Activated T-helper 1 cell treated with anti-CD3 and anti-CD28 coated beads, Interleukin-12 subunit alpha, Interleukin-12 subunit beta, Interleukin-2, Interleukin-4 antibody, amounts not matched to agents 30 ng/mL and 10 ng/mL and 1 ng/mL, durations not matched to agents 14 hours and 24 hours and 36 hours (primary cell): ENCODE measurements at regions of chr1 and their contacts with region 1.

Region 1: GRCh38 chr1:88935522-88936222 is 44.3 kb upstream of the GTF2B start:
- DNase-seq: no peak
- H3K4me3 Mint-ChIP-seq: no peak overlapping the region
- H3K27ac Mint-ChIP-seq: no peak overlapping the region
- H3K4me1 Mint-ChIP-seq: no peaks in the 10 kb centered on the region
- H3K27me3 Mint-ChIP-seq: no peaks in the 10 kb centered on the region

Region 2: DNA sequence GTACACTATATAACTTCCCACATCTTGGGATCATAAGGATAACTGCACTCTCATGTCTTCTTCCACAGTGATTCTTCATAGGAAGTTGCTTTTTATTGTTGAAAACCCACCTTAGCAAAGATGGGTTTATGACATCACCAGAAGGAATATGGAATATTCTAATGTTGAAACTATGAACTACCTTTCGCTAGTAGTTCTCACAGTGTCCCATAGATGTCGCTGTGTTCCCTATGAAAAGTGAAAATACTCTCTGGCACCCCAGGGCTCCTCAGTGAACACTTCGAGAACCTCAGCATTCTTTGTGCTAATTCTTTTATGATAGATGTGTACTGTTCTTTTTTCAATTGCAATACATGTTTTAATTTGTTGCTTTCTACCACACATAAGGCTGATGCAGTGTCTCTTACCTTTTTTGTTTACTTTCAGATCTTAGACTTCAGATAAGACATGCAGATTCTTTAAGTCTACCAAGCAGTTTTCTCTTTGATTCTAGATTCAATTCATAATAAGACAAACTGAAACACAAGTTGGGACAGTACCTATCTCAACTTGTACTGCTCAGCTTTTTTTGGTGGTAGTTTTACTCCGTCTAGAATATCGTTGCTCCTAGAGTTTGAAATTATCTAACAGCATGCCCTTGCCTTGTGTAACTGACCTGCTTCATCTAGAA is 135.2 kb before region 1 on chr1:
- intact Hi-C with region 1: loop called (anchors 5 kb)
- DNase-seq: peak; percentile 16
- H3K4me3 Mint-ChIP-seq: no peak overlapping the region
- H3K27ac Mint-ChIP-seq: no peak overlapping the region
- H3K4me1 Mint-ChIP-seq: peaks cover 14% of the 10 kb centered on the region
- H3K27me3 Mint-ChIP-seq: no peaks in the 10 kb centered on the region

Region 3: GRCh38 chr1:88983791-88984559 is 48.3 kb after region 1 on chr1:
- intact Hi-C with region 1: no loop called
- DNase-seq: no peak
- H3K4me3 Mint-ChIP-seq: peak overlapping the region; percentile 31
- H3K27ac Mint-ChIP-seq: peak overlapping the region; percentile 45
- H3K4me1 Mint-ChIP-seq: peaks cover 86% of the 10 kb centered on the region
- H3K27me3 Mint-ChIP-seq: no peaks in the 10 kb centered on the region

Region 4: DNA sequence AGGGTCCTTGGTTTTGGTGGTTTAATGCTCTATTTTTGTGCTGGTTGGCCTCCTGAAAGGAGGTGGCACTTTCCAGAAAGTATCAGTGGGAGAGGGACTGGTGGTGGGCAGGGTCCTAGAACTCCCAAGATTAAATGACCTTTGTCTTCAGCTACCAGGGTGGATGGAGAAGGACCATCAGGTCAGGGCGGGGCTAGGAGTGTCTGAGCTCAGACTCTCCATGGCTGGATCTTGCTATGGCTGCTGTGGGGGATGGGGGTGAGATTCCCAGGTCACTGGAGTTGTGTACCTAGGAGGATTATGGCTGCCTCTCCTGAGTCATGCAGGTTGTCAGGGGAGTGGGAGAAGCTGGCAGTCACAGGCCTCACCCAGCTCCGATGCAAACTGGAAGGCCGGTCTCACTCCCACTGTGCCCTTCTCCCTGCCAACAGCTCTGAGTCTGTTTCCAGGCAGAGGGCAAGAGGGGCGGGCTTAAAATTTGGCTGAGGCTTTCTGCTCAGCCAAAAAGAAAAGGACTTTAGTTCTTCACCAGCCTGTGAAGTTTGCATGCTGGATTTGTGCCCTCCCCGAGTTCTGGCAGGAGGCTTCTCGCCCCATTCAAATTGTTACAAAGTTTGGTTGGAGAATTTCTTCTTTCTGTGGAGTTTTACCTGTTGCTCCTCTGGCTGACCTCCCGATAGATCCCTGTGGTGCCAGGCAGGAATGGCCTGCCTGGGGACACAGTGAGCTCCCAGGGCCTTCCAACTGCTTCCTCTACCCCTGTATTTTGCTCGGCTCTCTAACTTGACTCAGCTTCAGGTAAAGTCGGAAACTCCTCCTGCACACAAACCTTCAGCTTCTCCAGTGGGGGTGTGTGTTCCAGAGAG is 69.8 kb after region 1 on chr1:
- intact Hi-C with region 1: no loop called
- DNase-seq: no peak
- H3K4me3 Mint-ChIP-seq: no peak overlapping the region
- H3K27ac Mint-ChIP-seq: peak overlapping the region; percentile 9
- H3K4me1 Mint-ChIP-seq: peaks cover 39% of the 10 kb centered on the region
- H3K27me3 Mint-ChIP-seq: no peaks in the 10 kb centered on the region